GM12878 (cell line): ENCODE measurements at regions of chr1 and their contacts with region 1.

Region 1: GRCh38 chr1:211323156-211324063 is 3.2 kb upstream of the TRAF5 start:
- DNase-seq: no peak
- ATAC-seq: peak; percentile 73
- H3K4me3 ChIP-seq: no peak overlapping the region
- H3K27ac ChIP-seq: no peak overlapping the region
- H3K4me1 ChIP-seq: peaks cover 12% of the 10 kb centered on the region
- H3K27me3 ChIP-seq: no peaks in the 10 kb centered on the region
- CTCF ChIP-seq: peak; percentile 89 to 97 (median 93)
- EP300 ChIP-seq: no peak
- POLR2A ChIP-seq: no peak
- RAD21 ChIP-seq: peak; percentile 91

Region 2: GRCh38 chr1:211258756-211259637 is 64.4 kb before region 1 on chr1 and contains the start of gene RCOR3:
- CTCF ChIA-PET with region 1: interaction called, 3 read pairs
- POLR2A ChIA-PET with region 1: interaction called, 8 read pairs
- RAD21 ChIA-PET with region 1: interaction called, 6 read pairs
- SMC1A ChIA-PET with region 1: interaction called, 4 read pairs
- in situ Hi-C with region 1: no loop called
- intact Hi-C with region 1: loop called (anchors 2 kb)
- DNase-seq: peak; percentile 51
- ATAC-seq: peak; percentile 83
- H3K4me3 ChIP-seq: peak within 1 kb of the TSS; percentile 96
- H3K27ac ChIP-seq: peak within 1 kb of the TSS; percentile 96
- H3K4me1 ChIP-seq: no peaks in the 10 kb centered on the region
- H3K27me3 ChIP-seq: no peaks in the 10 kb centered on the region
- CTCF ChIP-seq: peak; percentile 51 to 83 (median 70)
- EP300 ChIP-seq: peak; percentile 37 to 38; a peak in 1 of 4 replicates
- POLR2A ChIP-seq: peak; percentile 78
- RAD21 ChIP-seq: peak; percentile 31
- polyA plus RNA-seq, gene RCOR3: 8.0 to 8.2 TPM

Region 3: DNA sequence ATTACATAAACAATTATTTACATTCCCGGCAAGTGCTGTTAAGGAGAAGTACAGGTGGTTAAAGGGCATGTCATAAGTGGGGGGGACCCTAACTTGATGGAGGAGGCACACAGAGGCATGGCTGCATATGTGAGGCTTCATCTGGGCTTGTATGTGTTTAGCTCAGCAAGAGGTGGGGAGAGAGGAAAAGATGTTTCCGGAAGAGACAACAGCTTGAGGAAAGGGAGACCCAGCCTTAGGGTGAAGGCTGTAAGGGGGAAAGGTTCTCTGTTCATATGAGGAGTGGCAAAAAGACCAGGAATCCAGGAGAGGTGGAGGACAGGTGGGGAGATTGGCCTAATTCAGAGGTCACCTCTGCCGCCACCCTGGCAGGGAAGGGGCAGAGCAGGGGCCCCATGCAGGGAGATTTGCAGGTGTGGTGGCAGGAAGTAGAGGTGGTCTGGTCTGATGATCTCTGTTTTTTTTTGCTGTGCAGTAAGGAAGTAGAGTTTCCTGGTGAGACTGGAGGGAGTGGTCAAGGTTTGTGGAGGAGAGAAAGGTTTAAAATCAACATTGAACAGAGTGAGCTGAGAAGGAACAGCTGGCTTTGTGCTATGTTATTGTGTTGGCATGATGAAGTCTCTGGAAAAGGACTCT is 12.2 kb after region 1 on chr1:
- CTCF ChIA-PET with region 1: interaction called, 27 read pairs
- POLR2A ChIA-PET with region 1: interaction called, 6 read pairs
- RAD21 ChIA-PET with region 1: interaction called, 6 read pairs
- SMC1A ChIA-PET with region 1: interaction called, 29 read pairs
- in situ Hi-C with region 1: no loop called
- intact Hi-C with region 1: no loop called
- DNase-seq: no peak
- ATAC-seq: peak; percentile 85
- H3K4me3 ChIP-seq: peak overlapping the region; percentile 59; the same call in 1 of the 2 replicates
- H3K27ac ChIP-seq: peak overlapping the region; percentile 64
- H3K4me1 ChIP-seq: peaks cover 40% of the 10 kb centered on the region
- H3K27me3 ChIP-seq: no peaks in the 10 kb centered on the region
- CTCF ChIP-seq: no peak
- EP300 ChIP-seq: no peak
- POLR2A ChIP-seq: no peak; the same call in 1 of the 2 replicates
- RAD21 ChIP-seq: no peak

Region 4: GRCh38 chr1:211352985-211353515 is 29.6 kb after region 1 on chr1:
- CTCF ChIA-PET with region 1: interaction called, 30 read pairs
- POLR2A ChIA-PET with region 1: interaction called, 6 read pairs
- RAD21 ChIA-PET with region 1: interaction called, 13 read pairs
- SMC1A ChIA-PET with region 1: interaction called, 12 read pairs
- in situ Hi-C with region 1: no loop called
- intact Hi-C with region 1: loop called (anchors 1 kb)
- DNase-seq: no peak
- ATAC-seq: peak; percentile 98
- H3K4me3 ChIP-seq: no peak overlapping the region
- H3K27ac ChIP-seq: no peak overlapping the region
- H3K4me1 ChIP-seq: peaks cover 4% of the 10 kb centered on the region
- H3K27me3 ChIP-seq: no peaks in the 10 kb centered on the region
- CTCF ChIP-seq: peak; percentile 63 to 93 (median 79)
- EP300 ChIP-seq: no peak
- POLR2A ChIP-seq: no peak
- RAD21 ChIP-seq: peak; percentile 73

Region 5: GRCh38 chr1:211469938-211470529 is 146.6 kb after region 1 on chr1:
- CTCF ChIA-PET with region 1: interaction called, 61 read pairs
- POLR2A ChIA-PET with region 1: interaction called, 4 read pairs
- RAD21 ChIA-PET with region 1: interaction called, 5 read pairs
- SMC1A ChIA-PET with region 1: interaction called, 14 read pairs
- in situ Hi-C with region 1: loop called (anchors 5 kb)
- intact Hi-C with region 1: no loop called
- DNase-seq: no peak
- ATAC-seq: peak; percentile 94
- H3K4me3 ChIP-seq: no peak overlapping the region
- H3K27ac ChIP-seq: no peak overlapping the region
- H3K4me1 ChIP-seq: no peaks in the 10 kb centered on the region
- H3K27me3 ChIP-seq: peaks cover 0 to 3% of the 10 kb centered on the region in 2 experiments; a peak in 1 of 4 replicates
- CTCF ChIP-seq: peak; percentile 79 to 93 (median 85)
- EP300 ChIP-seq: no peak
- POLR2A ChIP-seq: no peak
- RAD21 ChIP-seq: peak; percentile 37

Region 6: GRCh38 chr1:211578640-211579433 is 255.4 kb after region 1 on chr1 and contains the start of gene SLC30A1:
- CTCF ChIA-PET with region 1: interaction called, 7 read pairs
- POLR2A ChIA-PET with region 1: interaction called, 3 read pairs
- RAD21 ChIA-PET with region 1: no interaction called
- SMC1A ChIA-PET with region 1: interaction called, 4 read pairs
- in situ Hi-C with region 1: no loop called
- intact Hi-C with region 1: loop called (anchors 5 kb)
- DNase-seq: peak; percentile 83
- ATAC-seq: peak; percentile 87
- H3K4me3 ChIP-seq: peak within 1 kb of the TSS; percentile 96
- H3K27ac ChIP-seq: peak within 1 kb of the TSS; percentile 84
- H3K4me1 ChIP-seq: peaks cover 23% of the 10 kb centered on the region
- H3K27me3 ChIP-seq: no peaks in the 10 kb centered on the region
- CTCF ChIP-seq: no peak
- EP300 ChIP-seq: peak in 1 of 2 experiments; percentile 27; a peak in 1 of 4 replicates
- POLR2A ChIP-seq: peak; percentile 91
- RAD21 ChIP-seq: no peak
- polyA plus RNA-seq, gene SLC30A1: 3.5 to 4.0 TPM